ENCODE measurements at regions of chr16 and their contacts with region 1.

Region 1: GRCh38 chr16:30692381-30693064 is 6.4 kb upstream of the SRCAP start:
- DNase-seq: no peak
- H3K4me3 ChIP-seq: no peak overlapping the region
- CTCF ChIP-seq: no peak

Region 2: GRCh38 chr16:30173054-30173453 is 519.5 kb before region 1 on chr16:
- CTCF ChIA-PET with region 1: no interaction called
- POLR2A ChIA-PET with region 1: no interaction called
- DNase-seq: no peak
- H3K4me3 ChIP-seq: no peak overlapping the region
- CTCF ChIP-seq: no peak

Region 3: DNA sequence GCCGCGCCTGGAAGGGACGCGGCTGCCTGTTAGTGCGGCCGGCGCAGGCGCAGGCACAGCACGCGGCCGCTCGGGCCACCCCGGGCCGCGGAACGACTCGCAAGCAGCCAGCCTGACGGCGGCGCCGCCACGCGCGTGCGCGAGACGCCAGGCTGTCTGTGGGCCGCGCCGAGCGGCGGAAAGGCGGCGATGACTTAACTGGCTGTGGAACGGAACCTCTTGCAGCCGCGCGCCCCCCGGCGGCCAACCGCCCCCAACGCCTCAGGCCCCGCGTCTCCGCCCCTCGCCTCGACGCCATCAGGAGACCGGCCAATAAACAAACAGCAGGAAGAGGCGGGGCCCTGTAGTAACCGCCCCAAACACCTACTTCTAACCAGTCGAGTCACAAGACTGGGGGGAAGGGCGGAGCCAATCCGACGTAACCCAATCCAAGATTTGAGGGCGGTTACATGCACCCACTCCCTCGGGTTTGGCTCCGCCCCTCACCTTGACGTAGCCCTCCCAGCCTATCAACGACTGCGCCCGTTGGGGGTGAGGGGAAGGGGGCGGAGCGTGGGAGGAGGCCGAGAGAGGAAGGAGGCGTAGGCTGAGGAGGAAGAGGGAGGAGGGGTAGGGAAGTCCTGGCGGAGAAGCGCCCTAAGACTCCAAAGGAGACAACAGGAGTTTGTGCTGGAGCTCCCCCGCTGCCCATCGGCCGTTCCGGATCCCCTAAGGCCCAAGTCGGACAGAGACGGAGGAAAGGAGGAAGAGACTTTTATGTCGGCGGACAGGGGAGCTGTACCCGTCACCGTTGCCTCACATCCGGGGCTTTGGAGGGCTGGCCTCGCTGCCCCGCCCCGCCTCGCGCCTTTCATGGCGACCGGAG is 34.4 kb before region 1 on chr16 and contains the start of gene FBRS:
- CTCF ChIA-PET with region 1: interaction called, 32 read pairs
- POLR2A ChIA-PET with region 1: interaction called, 11 read pairs
- DNase-seq: peak; percentile 100
- H3K4me3 ChIP-seq: peak within 1 kb of the TSS; percentile 80
- CTCF ChIP-seq: peak; percentile 95

Region 4: DNA sequence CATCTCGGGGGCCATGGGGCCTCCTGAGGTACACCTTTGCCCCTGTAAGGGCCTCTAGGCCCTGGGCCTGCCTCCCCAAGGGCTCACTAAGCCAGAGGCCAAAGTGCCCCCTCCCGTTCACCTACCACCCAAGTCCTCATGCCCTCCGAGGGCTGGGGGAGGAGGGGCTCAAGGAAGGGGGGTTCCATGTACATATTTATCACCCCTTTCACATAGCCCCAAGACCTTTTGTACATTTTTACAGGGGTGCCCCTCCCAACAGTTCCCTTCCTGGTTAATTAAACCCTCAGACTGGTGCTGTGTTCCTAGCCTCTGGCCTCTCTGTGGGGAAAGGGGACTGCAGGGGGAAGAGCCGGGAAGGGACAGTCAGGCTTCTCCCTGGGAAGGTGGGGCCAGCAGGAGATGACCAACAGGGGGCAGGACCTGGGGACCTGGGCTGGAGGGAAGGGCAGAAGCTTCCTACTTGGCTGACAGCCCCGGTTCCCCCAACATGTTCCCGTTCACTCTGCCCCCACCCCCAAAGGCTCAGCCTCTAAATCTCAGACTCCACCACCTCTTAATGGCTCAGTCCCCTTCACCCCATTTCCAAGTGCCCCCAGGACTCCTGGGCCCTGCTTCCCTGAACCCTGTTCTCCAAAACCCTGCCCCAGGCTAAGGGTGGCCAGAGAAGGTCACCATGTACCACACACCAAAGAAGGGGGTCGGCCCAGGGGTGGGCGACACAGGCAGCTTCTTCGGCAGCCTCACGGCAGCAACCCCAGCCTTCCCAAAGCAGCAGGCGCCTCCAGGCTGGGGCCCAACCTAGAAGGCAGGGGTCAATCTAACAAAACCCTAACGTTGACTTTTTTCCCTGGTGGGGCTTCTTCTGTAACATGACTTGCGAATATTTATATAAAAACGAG is 22.4 kb before region 1 on chr16:
- CTCF ChIA-PET with region 1: interaction called, 17 read pairs
- POLR2A ChIA-PET with region 1: no interaction called
- DNase-seq: no peak
- H3K4me3 ChIP-seq: no peak overlapping the region
- CTCF ChIP-seq: no peak

Region 5: DNA sequence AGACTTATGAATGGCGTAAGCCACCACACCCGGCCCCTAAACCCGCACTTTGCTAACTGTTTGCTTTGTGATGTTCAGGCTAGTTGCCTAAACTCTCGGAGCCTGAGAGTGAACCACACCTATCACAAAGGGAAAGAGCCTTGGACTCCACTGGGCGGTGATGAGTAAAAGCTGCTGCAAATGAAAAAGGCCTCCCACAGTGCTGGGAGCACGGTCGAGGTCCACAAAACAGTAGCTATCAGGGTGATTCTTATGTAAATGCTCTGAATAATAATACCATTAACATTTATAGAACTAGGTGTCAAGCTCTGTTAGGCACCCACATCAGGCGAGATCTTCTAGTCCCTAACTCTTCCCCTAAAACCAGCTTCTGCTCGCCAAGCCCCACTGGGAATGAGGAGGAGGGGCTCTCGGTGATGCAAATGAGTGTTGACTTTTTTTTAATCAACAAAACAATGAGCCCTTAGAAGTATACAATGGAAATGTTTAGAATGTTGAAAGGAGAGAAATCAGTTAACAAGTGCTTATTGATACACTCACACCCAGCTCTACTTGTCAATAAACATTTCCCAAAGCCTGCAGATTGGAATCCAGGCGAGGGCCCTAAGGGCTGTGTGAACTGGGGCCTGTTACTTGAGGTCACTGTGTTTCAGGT is 14.5 kb before region 1 on chr16:
- CTCF ChIA-PET with region 1: interaction called, 23 read pairs
- POLR2A ChIA-PET with region 1: no interaction called
- DNase-seq: no peak
- H3K4me3 ChIP-seq: no peak overlapping the region
- CTCF ChIP-seq: no peak

Region 6: GRCh38 chr16:30844671-30845449 is 152.3 kb after region 1 on chr16:
- CTCF ChIA-PET with region 1: no interaction called
- POLR2A ChIA-PET with region 1: no interaction called
- DNase-seq: peak; percentile 53
- H3K4me3 ChIP-seq: peak overlapping the region; percentile 18; the same call in 1 of the 2 replicates
- CTCF ChIP-seq: peak; percentile 83

Region 7: DNA sequence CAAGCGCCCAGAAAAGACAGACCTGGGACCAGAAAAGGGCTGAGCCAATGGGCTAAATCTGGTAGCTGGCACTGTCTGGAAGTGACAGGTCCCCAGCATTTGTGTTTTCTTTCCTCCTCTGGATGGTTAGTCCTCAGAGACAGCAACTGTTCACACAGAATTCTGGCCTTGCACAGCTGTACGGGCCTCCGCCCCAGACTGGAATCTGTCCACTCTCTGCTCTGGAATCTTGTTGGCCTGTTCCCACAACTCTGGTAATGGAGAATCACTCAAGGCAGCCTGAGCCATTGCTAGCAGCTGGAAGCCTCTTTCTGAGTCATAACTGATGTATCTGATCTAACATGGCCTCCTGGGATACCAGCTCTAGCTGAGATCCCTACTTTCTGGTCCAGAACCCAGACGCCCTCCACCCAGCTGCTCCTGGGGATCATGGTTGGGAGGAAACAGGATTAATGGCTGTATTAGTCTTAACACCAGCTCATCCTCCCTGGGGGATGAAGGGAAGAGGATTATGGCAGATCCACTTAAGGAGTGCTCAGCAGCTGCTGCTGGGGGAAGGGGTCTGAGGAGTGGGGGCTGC is 372.4 kb after region 1 on chr16:
- CTCF ChIA-PET with region 1: no interaction called
- POLR2A ChIA-PET with region 1: no interaction called
- DNase-seq: peak; percentile 82
- H3K4me3 ChIP-seq: no peak overlapping the region
- CTCF ChIP-seq: no peak

Measured in AG04449 (cell line).